ENCODE measurements at regions of chr1 and their contacts with region 1.

Region 1: DNA sequence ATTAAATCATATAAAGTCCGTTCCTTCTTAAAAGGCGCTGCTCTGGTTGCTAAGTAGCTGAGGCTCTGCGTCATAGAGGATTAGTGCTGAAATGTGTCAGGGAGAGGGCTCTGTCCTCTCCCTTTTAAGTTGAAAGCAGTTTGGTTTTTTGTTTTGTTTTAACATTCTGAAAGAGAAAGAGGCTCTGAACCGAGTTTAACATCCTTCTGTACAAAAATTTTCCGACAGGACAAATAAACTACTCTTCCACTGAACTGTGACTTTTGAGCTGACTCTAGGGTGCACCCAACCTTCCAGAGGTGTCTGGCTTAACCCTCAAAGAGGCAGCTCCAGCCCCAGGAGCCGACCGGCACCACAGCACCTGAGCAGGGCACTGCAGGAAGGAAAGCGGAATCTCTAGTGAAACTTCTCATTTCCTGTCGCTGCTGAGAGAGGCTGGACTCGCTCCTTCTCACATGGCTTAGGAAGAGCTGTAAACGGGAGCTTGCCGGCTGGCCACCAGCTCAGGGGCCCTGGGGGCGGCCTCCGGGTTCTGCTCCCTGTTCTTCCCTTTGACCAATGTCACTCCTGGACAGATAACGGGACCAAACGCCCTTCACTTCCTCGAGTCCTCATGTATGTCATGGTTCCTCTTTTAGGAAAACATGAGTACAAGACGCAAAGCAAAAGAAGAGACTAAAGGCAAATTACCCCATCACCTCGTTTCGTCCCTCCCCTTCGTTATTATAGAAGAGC is 1.2 kb downstream of the VAV3 start:
- DNase-seq: peak; percentile 44 to 64 (median 58)
- H3K4me3 ChIP-seq: peak overlapping the region; percentile 48 to 78
- H3K4me3 Mint-ChIP-seq: peak overlapping the region; percentile 90 to 99 (median 93)
- H3K27ac ChIP-seq: peak overlapping the region; percentile 37
- H3K27ac Mint-ChIP-seq: peak overlapping the region; percentile 72 to 93 (median 89)
- H3K4me1 ChIP-seq: peaks cover 21% of the 10 kb centered on the region
- H3K4me1 Mint-ChIP-seq: peaks cover 17 to 34% (median 24%) of the 10 kb centered on the region in 4 donors
- H3K27me3 ChIP-seq: no peaks in the 10 kb centered on the region
- H3K27me3 Mint-ChIP-seq: peaks cover 3 to 4% of the 10 kb centered on the region in 2 donors

Region 2: GRCh38 chr1:107897438-107898345 is 66.1 kb before region 1 on chr1:
- CTCF ChIA-PET with region 1: interaction called, 5 read pairs
- POLR2A ChIA-PET with region 1: no interaction called
- intact Hi-C with region 1: loop called (anchors 10 kb)
- DNase-seq: no peak
- H3K4me3 ChIP-seq: no peak overlapping the region
- H3K4me3 Mint-ChIP-seq: peak overlapping the region in 6 of 8 donors; percentile 2 to 49 (median 13)
- H3K27ac ChIP-seq: no peak overlapping the region
- H3K27ac Mint-ChIP-seq: peak overlapping the region in 4 of 7 donors; percentile 2 to 19 (median 9)
- H3K4me1 ChIP-seq: peaks cover 13% of the 10 kb centered on the region
- H3K4me1 Mint-ChIP-seq: peaks cover 9 to 30% (median 18%) of the 10 kb centered on the region in 4 donors
- H3K27me3 ChIP-seq: no peaks in the 10 kb centered on the region
- H3K27me3 Mint-ChIP-seq: no peaks in the 10 kb centered on the region

Region 3: GRCh38 chr1:108075055-108075454 is 111.3 kb after region 1 on chr1:
- CTCF ChIA-PET with region 1: interaction called, 8 read pairs
- POLR2A ChIA-PET with region 1: interaction called, 3 read pairs
- intact Hi-C with region 1: loop called (anchors 10 kb)
- DNase-seq: no peak
- H3K4me3 ChIP-seq: no peak overlapping the region
- H3K4me3 Mint-ChIP-seq: no peak overlapping the region
- H3K27ac ChIP-seq: no peak overlapping the region
- H3K27ac Mint-ChIP-seq: no peak overlapping the region
- H3K4me1 ChIP-seq: peaks cover 35% of the 10 kb centered on the region
- H3K4me1 Mint-ChIP-seq: peaks cover 21 to 32% (median 27%) of the 10 kb centered on the region in 4 donors
- H3K27me3 ChIP-seq: no peaks in the 10 kb centered on the region
- H3K27me3 Mint-ChIP-seq: no peaks in the 10 kb centered on the region

Region 4: DNA sequence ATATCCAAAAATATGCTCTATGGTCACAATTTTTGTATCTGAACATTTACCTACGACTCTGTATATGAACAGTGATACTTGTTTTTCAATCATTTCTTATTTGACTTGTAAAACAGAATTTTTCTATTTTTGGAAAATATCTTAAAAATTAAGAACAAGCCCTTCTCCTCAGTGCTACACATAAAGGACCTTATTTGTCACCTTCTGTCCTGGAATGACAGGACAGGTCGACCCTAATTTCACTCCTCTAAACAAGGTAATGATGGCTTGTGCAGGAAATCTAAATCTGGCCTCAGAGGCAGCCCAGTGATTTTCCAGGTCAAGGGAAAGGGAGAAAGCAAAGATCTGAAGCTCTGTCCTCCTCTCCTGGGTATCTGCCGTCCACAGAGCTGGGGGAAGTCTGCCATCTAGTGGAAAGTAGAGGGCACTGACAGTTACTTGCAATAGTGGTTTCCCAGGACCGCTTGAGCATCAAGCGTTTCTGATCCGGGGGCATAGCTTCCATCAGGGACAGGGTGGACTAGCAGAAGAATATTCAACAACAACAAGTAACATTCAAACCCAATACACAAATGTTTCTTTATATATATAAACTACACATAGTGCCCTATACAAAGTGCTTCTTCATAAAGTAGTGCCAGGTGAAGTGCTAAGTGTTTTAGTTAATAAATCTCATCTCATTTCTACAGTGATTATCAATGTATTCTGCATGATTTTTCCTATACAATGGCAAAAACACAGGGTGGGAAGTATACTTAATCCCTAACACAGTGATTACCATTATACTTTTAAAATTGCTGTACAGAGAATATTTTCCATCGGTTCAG is 161.8 kb after region 1 on chr1:
- CTCF ChIA-PET with region 1: interaction called, 9 read pairs
- POLR2A ChIA-PET with region 1: interaction called, 4 read pairs
- intact Hi-C with region 1: loop called (anchors 2 kb)
- DNase-seq: peak; percentile 53 to 72 (median 67)
- H3K4me3 ChIP-seq: no peak overlapping the region
- H3K4me3 Mint-ChIP-seq: no peak overlapping the region
- H3K27ac ChIP-seq: no peak overlapping the region
- H3K27ac Mint-ChIP-seq: peak overlapping the region in 1 of 7 donors; percentile 18
- H3K4me1 ChIP-seq: no peaks in the 10 kb centered on the region
- H3K4me1 Mint-ChIP-seq: peaks cover 0 to 6% (median 5%) of the 10 kb centered on the region in 4 donors
- H3K27me3 ChIP-seq: no peaks in the 10 kb centered on the region
- H3K27me3 Mint-ChIP-seq: peaks cover 0 to 2% of the 10 kb centered on the region in 2 donors

Region 5: DNA sequence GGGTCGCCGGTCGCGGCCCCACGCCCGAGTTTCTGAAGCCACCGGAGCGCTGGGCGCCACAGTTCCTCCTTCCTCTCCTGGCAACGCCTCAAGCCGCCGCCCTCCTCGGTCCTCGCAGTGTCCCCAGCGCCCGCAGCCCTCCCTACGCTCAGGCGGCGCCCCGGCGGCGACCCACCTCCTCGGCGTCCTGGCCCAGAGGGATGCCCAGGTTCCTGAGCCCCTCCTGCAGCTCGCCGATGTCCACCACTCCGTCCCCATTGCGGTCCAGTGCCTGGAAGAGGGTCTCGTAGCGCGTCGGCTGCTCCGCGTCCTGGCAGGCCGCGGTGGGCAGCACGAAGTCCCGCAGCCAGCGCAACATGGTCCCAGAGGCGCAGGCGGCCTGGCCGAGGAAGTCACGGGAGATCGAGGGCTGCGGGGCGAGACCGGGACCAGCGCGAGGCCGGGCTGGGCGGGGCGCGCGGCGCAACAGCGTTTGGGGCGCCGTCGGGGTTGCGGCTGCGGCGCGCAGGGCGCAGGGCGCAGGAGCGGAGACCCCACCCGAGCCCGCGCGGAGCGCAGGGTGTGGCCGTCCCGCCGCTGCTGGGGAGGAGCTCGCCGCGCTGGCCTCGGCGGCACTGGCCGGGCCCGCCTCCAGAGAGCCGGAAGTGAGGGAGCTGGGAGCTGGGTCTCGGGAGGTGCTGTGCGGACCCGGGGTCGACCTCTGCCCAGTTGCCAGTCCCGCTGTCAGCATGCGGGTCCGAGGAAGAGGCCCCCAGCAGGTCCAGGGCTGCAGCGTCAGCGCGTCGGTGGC is 236.2 kb after region 1 on chr1 and contains the start of gene SLC25A24:
- CTCF ChIA-PET with region 1: no interaction called
- POLR2A ChIA-PET with region 1: no interaction called
- intact Hi-C with region 1: loop called (anchors 1 kb)
- DNase-seq: peak; percentile 72 to 82 (median 78)
- H3K4me3 ChIP-seq: peak within 1 kb of the TSS; percentile 58 to 80
- H3K4me3 Mint-ChIP-seq: peak within 1 kb of the TSS; percentile 87 to 94 (median 92)
- H3K27ac ChIP-seq: peak within 1 kb of the TSS; percentile 64
- H3K27ac Mint-ChIP-seq: peak within 1 kb of the TSS; percentile 85 to 93 (median 90)
- H3K4me1 ChIP-seq: peaks cover 23% of the 10 kb centered on the region
- H3K4me1 Mint-ChIP-seq: peaks cover 31 to 45% (median 37%) of the 10 kb centered on the region in 4 donors
- H3K27me3 ChIP-seq: no peaks in the 10 kb centered on the region
- H3K27me3 Mint-ChIP-seq: no peaks in the 10 kb centered on the region
- total RNA-seq, gene SLC25A24: 18.6 to 19.1 TPM

Region 6: DNA sequence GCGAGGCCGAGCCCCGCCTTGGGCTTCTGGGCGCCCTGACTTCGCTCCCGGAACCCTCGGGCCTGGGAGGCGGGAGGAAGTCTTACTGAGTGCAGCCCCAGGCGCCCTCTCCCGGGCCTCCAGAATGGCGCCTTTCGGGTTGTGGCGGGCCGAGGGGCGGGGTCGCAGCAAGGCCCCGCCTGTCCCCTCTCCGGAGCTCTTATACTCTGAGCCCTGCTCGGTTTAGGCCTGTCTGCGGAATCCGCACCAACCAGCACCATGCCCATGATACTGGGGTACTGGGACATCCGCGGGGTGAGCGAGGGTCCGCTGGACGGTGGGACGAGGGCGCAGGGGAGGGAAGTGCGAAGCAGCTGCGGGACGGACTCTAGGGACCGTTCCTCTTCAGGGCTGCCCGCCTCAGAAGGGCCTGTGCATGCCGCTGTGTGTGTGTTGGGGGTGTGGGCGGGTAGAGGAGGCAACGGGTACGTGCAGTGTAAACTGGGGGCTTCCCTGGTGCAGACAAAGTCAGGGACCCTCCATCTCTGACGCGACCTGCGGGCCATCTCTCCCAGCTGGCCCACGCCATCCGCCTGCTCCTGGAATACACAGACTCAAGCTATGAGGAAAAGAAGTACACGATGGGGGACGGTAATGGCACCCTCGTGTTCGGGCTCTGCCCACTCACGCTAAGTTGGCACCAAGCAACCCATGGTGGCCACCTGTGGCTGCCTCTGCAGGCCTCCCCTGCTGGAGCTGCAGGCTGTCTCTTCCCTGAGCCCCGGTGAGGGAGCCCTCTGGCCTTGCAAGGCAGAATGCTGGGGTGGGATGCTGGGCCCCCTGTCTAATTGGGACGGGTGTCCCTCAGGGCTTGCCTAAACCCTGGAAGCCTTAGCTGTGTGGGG is 1724.1 kb after region 1 on chr1 and contains the start of gene GSTM1:
- CTCF ChIA-PET with region 1: no interaction called
- POLR2A ChIA-PET with region 1: no interaction called
- intact Hi-C with region 1: no loop called
- DNase-seq: peak in 3 of 5 donors; percentile 77 to 80 (median 78)
- H3K4me3 ChIP-seq: peak within 1 kb of the TSS in 1 of 2 donors; percentile 52
- H3K4me3 Mint-ChIP-seq: peak within 1 kb of the TSS in 5 of 8 donors; percentile 86 to 93 (median 90)
- H3K27ac ChIP-seq: peak within 1 kb of the TSS; percentile 26
- H3K27ac Mint-ChIP-seq: peak within 1 kb of the TSS in 4 of 7 donors; percentile 92 to 94 (median 92)
- H3K4me1 ChIP-seq: no peaks in the 10 kb centered on the region
- H3K4me1 Mint-ChIP-seq: peaks cover 0 to 18% (median 11%) of the 10 kb centered on the region in 4 donors
- H3K27me3 ChIP-seq: no peaks in the 10 kb centered on the region
- H3K27me3 Mint-ChIP-seq: no peaks in the 10 kb centered on the region
- total RNA-seq, gene GSTM1: not detected